Prostate gland (tissue), 2 donors: ENCODE measurements at regions of chr14 and their contacts with region 1.

Region 1: DNA sequence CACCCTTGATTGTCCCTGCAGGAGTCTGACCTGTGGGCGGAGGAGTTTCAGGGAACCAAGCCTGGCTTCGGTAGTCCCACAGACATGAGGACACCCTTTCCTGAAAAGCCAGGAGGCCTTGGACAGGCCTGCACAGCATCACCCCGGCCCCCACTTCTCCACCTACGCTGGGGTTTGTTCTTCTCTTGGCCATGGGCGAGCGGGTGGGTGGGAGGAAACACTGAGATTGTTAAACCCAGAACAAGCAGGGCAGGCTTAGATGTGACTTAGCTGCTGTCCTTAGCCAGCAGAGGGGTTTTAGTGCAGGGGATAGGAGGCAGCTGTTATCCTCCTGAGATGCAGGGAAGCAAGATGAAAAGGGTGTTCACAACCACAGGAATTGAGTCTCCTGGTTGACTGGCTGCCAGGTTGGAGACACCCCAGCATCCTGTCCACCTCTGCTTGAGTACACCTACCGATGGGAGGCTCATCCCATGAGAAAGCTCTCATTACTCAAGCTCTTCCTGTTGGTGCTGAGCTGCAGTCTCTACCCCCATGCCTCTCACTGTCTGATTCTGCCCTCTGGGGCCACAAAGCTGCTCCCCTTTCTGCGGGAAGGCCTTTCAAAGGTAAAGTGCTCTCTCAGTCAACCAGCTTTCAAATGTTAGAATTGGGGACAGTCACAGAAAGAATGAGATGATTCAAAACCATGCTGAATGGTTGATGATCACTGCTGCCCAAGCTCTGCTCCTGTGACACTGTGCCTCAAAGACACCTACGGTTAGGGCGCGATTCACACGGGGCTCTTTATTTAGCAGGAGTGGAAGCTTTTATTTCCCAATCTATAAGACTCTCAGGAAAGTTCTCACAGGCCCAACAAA is 86.3 kb downstream of the IRF2BPL start:
- DNase-seq: no peak
- H3K4me3 ChIP-seq: no peak overlapping the region
- H3K27ac ChIP-seq: no peak overlapping the region
- H3K4me1 ChIP-seq: peaks cover 6% of the 10 kb centered on the region
- H3K27me3 ChIP-seq: no peaks in the 10 kb centered on the region
- CTCF ChIP-seq: no peak
- POLR2A ChIP-seq: no peak

Region 2: DNA sequence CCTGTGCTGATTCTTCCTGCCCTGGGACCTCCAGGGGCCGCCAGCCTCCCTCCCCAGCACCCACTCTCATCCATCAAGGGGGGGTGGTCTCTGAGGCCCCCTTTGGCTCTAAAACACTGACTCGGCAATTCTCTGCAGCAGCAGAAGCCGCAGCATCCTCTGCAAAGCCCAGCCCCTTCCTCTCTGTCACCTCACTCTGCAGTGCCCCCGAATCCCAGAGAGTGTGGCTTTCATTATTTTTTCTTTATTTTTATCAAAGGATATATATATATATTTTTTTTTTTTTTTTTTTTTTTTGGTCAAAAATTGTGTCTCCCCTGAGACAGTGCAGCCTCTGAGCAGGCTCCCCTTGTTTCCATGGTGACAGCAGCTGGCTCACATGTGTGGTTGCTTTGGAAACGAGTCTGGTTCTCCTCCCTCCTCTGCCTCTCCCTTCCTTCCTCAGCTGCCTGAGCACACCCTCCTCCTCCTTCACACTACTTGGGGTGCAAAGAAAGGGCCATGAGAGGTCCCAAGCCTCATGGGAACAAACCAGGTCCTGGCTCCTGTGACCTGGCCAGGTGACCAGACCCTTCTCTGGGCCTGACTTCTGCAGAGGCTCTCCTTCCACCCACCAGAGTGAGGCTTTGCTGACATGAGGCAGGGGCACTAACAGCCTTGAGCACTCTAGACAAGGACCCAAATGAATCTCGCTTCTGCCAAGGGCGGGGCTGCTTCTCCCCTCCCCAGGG is 15.5 kb before region 1 on chr14:
- intact Hi-C with region 1: loop called (anchors 1 kb)
- DNase-seq: no peak
- H3K4me3 ChIP-seq: no peak overlapping the region
- H3K27ac ChIP-seq: no peak overlapping the region
- H3K4me1 ChIP-seq: no peaks in the 10 kb centered on the region
- H3K27me3 ChIP-seq: no peaks in the 10 kb centered on the region
- CTCF ChIP-seq: no peak
- POLR2A ChIP-seq: no peak